Activated CD8-positive, alpha-beta T cell treated with anti-CD3 and anti-CD28 coated beads, Interleukin-2, amount 10 ng/mL, durations not matched to agents 7 days and 5 days (primary cell): ENCODE measurements at regions of chr13 and their contacts with region 1.

Region 1: GRCh38 chr13:24605923-24606372 is 74.3 kb upstream of the ATP12A start:
- DNase-seq: no peak
- ATAC-seq: peak; percentile 65
- H3K4me3 Mint-ChIP-seq: no peak overlapping the region
- H3K27ac Mint-ChIP-seq: peak overlapping the region; percentile 41
- H3K4me1 Mint-ChIP-seq: peaks cover 14% of the 10 kb centered on the region
- H3K27me3 Mint-ChIP-seq: no peaks in the 10 kb centered on the region

Region 2: GRCh38 chr13:24307211-24308067 is 298.5 kb before region 1 on chr13:
- CTCF ChIA-PET with region 1: no interaction called
- POLR2A ChIA-PET with region 1: no interaction called
- DNase-seq: no peak
- ATAC-seq: no peak
- H3K4me3 Mint-ChIP-seq: no peak overlapping the region
- H3K27ac Mint-ChIP-seq: no peak overlapping the region
- H3K4me1 Mint-ChIP-seq: no peaks in the 10 kb centered on the region
- H3K27me3 Mint-ChIP-seq: no peaks in the 10 kb centered on the region

Region 3: DNA sequence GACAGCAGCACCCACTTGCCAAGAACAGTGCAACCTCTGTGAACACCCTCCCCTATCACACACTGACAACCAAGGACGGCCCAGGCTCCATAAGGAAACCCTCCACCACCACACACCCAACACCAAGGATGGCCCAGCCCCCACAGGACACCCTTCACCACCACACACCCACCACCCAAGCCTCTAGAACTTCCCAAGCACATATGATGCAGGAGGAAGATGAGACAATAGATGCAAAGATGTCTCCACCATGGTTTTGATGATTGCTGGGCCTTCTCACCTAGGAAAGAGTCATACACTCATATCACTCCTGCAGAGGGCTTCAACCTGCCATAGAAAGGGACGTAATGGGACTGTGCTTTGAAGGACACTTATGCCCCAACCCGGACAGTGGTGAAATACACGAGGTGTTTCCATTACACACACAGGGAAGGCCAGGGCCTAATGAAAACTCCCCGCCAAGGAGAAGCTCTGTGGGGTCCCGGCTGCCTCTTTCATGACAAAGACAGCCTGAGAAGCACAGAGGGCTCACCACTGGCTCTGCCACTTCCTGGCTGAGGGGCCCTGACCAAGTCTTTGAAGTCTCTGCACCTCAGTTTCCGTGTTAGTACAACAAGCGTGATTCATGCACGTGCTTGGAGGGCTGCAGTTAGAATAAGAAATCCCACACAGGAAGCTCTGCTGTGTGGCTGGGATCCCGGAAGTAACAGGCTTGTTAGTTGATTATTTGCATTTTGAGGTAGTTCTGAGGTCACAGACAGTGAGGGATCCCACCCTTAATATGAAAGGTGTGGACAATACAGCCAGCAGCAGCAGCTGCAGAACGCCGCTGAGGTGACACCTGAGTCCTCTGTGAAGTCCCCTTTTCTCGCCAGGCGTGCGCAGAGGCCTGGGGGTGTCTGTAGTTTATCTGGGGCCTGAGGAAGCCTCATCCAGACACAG is 12.3 kb after region 1 on chr13:
- CTCF ChIA-PET with region 1: interaction called, 31 read pairs
- POLR2A ChIA-PET with region 1: interaction called, 9 read pairs
- DNase-seq: peak; percentile 92
- ATAC-seq: peak; percentile 93
- H3K4me3 Mint-ChIP-seq: peak overlapping the region; percentile 12
- H3K27ac Mint-ChIP-seq: peak overlapping the region; percentile 82
- H3K4me1 Mint-ChIP-seq: peaks cover 55% of the 10 kb centered on the region
- H3K27me3 Mint-ChIP-seq: no peaks in the 10 kb centered on the region

Region 4: GRCh38 chr13:24627099-24627714 is 21.3 kb after region 1 on chr13:
- CTCF ChIA-PET with region 1: interaction called, 31 read pairs
- POLR2A ChIA-PET with region 1: no interaction called
- DNase-seq: no peak
- ATAC-seq: no peak
- H3K4me3 Mint-ChIP-seq: no peak overlapping the region
- H3K27ac Mint-ChIP-seq: peak overlapping the region; percentile 87
- H3K4me1 Mint-ChIP-seq: peaks cover 45% of the 10 kb centered on the region
- H3K27me3 Mint-ChIP-seq: no peaks in the 10 kb centered on the region

Region 5: GRCh38 chr13:24671386-24672107 is 65.6 kb after region 1 on chr13:
- CTCF ChIA-PET with region 1: interaction called, 15 read pairs
- POLR2A ChIA-PET with region 1: interaction called, 4 read pairs
- DNase-seq: peak; percentile 36
- ATAC-seq: peak; percentile 44
- H3K4me3 Mint-ChIP-seq: no peak overlapping the region
- H3K27ac Mint-ChIP-seq: no peak overlapping the region
- H3K4me1 Mint-ChIP-seq: peaks cover 11% of the 10 kb centered on the region
- H3K27me3 Mint-ChIP-seq: peaks cover 25% of the 10 kb centered on the region

Region 6: GRCh38 chr13:24683838-24684599 is 78.1 kb after region 1 on chr13:
- CTCF ChIA-PET with region 1: interaction called, 11 read pairs
- POLR2A ChIA-PET with region 1: no interaction called
- DNase-seq: peak; percentile 76
- ATAC-seq: peak; percentile 50
- H3K4me3 Mint-ChIP-seq: no peak overlapping the region
- H3K27ac Mint-ChIP-seq: no peak overlapping the region
- H3K4me1 Mint-ChIP-seq: peaks cover 38% of the 10 kb centered on the region
- H3K27me3 Mint-ChIP-seq: peaks cover 51% of the 10 kb centered on the region